ENCODE measurements at regions of chr3 and their contacts with region 1.

Region 1: GRCh38 chr3:135719449-135719848 is 246.1 kb upstream of the PPP2R3A start:
- DNase-seq: no peak
- ATAC-seq: no peak
- H3K4me3 ChIP-seq: no peak overlapping the region
- H3K27ac ChIP-seq: no peak overlapping the region
- H3K4me1 ChIP-seq: no peaks in the 10 kb centered on the region
- H3K27me3 ChIP-seq: peaks cover 0 to 4% (median 0%) of the 10 kb centered on the region in 7 donors
- CTCF ChIP-seq: no peak

Region 2: GRCh38 chr3:135834465-135834864 is 115.0 kb after region 1 on chr3:
- intact Hi-C with region 1: loop called in 1 of 10 experiments (anchors 10 kb)
- DNase-seq: no peak
- ATAC-seq: no peak
- H3K4me3 ChIP-seq: no peak overlapping the region
- H3K27ac ChIP-seq: no peak overlapping the region
- H3K4me1 ChIP-seq: no peaks in the 10 kb centered on the region
- H3K27me3 ChIP-seq: peaks cover 0 to 3% (median 0%) of the 10 kb centered on the region in 7 donors
- CTCF ChIP-seq: no peak

Measured in heart right ventricle (tissue), 16 donors.